PC-3 (cell line): ENCODE measurements at regions of chr11 and their contacts with region 1.

Region 1: GRCh38 chr11:16986434-16987215 is 27.6 kb downstream of the PLEKHA7 start:
- DNase-seq: peak; percentile 58
- ATAC-seq: peak; percentile 66
- H3K4me3 ChIP-seq: no peak overlapping the region
- H3K27ac ChIP-seq: peak overlapping the region; percentile 21
- H3K4me1 ChIP-seq: peaks cover 21% of the 10 kb centered on the region
- H3K27me3 ChIP-seq: no peaks in the 10 kb centered on the region
- CTCF ChIP-seq: no peak

Region 2: DNA sequence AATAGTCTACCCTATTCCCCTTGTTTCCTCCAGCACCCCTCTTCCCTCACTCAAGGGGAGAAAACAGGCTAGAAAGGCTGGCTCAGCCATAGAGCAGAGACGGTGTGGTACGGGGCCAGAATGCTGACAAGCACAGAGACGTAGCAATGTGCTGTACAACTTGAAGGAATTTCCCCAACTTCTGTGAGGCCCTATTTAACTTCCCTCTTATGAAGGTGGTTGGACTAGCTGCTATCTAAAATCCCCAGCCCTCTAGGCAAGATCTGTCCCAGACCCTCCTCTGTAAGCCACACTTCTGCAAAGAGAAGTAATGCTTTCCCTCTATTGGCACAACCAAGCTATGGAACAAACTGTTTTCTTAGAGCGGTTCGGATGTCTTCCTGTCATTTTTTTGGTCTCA is 10.2 kb before region 1 on chr11:
- CTCF ChIA-PET with region 1: no interaction called
- POLR2A ChIA-PET with region 1: interaction called, 10 read pairs
- intact Hi-C with region 1: no loop called
- DNase-seq: no peak
- ATAC-seq: no peak
- H3K4me3 ChIP-seq: no peak overlapping the region
- H3K27ac ChIP-seq: no peak overlapping the region
- H3K4me1 ChIP-seq: peaks cover 8% of the 10 kb centered on the region; the same call in 1 of the 2 replicates
- H3K27me3 ChIP-seq: no peaks in the 10 kb centered on the region
- CTCF ChIP-seq: no peak

Region 3: GRCh38 chr11:17046690-17047089 is 60.1 kb after region 1 on chr11:
- CTCF ChIA-PET with region 1: no interaction called
- POLR2A ChIA-PET with region 1: no interaction called
- intact Hi-C with region 1: no loop called
- DNase-seq: no peak
- ATAC-seq: no peak
- H3K4me3 ChIP-seq: no peak overlapping the region
- H3K27ac ChIP-seq: no peak overlapping the region
- H3K4me1 ChIP-seq: no peaks in the 10 kb centered on the region
- H3K27me3 ChIP-seq: no peaks in the 10 kb centered on the region
- CTCF ChIP-seq: no peak

Region 4: GRCh38 chr11:17371614-17372013 is 385.0 kb after region 1 on chr11:
- CTCF ChIA-PET with region 1: no interaction called
- POLR2A ChIA-PET with region 1: no interaction called
- intact Hi-C with region 1: no loop called
- DNase-seq: no peak
- ATAC-seq: no peak
- H3K4me3 ChIP-seq: no peak overlapping the region
- H3K27ac ChIP-seq: no peak overlapping the region
- H3K4me1 ChIP-seq: no peaks in the 10 kb centered on the region
- H3K27me3 ChIP-seq: no peaks in the 10 kb centered on the region
- CTCF ChIP-seq: no peak